Activated T-helper 2 cell treated with anti-CD3 and anti-CD28 coated beads, Interferon-gamma antibody, Interleukin-2, Interleukin-4, amounts not matched to agents 10 μg/mL and 5 μg/mL and 100 μg/mL, durations not matched to agents 14 hours and 24 hours and 36 hours (primary cell): ENCODE measurements at regions of chr1 and their contacts with region 1.

Region 1: DNA sequence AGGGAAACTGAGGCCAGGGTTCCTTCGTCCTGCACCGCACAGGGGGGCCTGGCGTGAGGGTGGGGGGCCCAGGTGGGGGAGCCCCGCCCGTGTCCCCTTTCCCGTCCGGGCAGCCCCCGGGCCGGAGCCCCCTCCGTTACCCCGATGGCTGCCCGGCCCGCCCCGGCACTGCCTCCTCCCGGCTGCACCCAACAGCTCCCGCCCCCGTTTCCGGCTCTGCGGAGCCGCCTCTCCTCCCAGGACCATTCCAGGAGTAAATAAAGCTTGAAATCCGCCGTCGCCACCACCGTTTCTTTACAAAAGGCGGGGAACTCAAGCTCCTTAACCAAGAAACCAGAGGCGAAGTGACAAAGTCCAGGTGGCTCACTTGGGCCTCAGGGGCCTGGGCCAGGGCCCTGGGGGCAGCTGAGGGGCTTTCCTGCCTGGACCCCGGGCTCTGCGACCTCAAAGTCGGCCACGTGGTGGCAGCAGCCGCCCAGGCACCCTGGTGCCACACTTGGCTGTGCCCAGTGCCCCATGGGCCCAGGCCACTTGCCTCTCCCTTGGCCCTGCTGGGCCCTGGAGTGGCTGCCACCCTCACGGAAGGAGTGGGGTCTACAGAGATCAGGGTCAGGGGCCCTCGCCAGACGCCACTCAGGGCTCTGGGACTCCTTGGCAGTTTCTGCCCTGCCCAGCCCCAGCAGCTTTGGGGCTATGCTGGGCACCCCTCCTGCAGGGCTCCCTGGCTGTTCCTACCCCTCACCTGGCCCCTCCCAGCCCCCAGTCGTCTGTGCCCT is 514 bp upstream of the FAAP20 start:
- DNase-seq: peak; percentile 91
- H3K4me3 Mint-ChIP-seq: peak overlapping the region; percentile 84
- H3K27ac Mint-ChIP-seq: peak overlapping the region; percentile 92
- H3K4me1 Mint-ChIP-seq: peaks cover 16% of the 10 kb centered on the region
- H3K27me3 Mint-ChIP-seq: no peaks in the 10 kb centered on the region

Region 2: DNA sequence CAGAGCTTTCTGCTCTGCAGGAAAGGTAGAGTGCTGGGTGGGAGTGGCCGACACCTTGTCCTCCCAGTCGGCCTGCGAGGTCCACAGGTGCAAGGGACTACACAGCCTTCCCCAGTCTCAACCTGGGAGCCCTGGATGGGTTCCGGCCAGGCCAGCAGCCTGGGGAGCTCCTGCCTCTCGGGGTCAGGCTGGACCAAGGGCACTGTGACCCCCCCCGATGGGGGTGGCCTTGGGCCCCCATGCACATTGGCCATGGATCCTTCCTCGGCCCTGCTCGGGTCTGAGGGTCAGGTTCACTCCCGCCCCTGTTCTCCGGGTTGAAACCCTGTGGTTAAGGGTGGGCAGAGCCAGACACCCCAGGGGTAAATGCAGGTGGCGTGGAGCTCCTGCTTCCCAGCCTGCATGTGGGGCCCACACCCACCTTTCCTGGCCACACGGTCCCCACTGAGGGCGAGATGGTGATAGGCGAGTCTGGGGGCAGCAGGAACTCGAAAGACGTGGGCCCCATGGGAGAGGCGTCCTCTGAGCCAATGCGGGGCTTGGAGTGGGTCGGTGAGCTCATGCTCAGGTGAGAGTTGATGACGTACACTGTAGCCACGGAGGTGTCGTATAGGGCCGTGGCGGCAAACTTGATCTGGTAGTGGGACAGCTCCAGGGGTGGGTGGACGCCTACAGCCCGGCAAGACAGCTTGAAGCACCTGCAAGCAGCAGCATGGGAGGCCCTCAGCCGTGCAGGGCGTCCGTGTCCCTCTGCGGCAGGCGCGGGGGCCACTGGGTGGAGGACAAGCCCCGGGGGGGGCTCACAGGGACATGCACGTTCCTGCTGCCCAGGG is 265.2 kb before region 1 on chr1:
- intact Hi-C with region 1: no loop called
- DNase-seq: no peak
- H3K4me3 Mint-ChIP-seq: no peak overlapping the region
- H3K27ac Mint-ChIP-seq: no peak overlapping the region
- H3K4me1 Mint-ChIP-seq: no peaks in the 10 kb centered on the region
- H3K27me3 Mint-ChIP-seq: no peaks in the 10 kb centered on the region

Region 3: GRCh38 chr1:2133039-2133878 is 61.8 kb before region 1 on chr1:
- intact Hi-C with region 1: loop called (anchors 2 kb)
- DNase-seq: peak; percentile 96
- H3K4me3 Mint-ChIP-seq: peak overlapping the region; percentile 76
- H3K27ac Mint-ChIP-seq: peak overlapping the region; percentile 52
- H3K4me1 Mint-ChIP-seq: peaks cover 8% of the 10 kb centered on the region
- H3K27me3 Mint-ChIP-seq: no peaks in the 10 kb centered on the region

Region 4: DNA sequence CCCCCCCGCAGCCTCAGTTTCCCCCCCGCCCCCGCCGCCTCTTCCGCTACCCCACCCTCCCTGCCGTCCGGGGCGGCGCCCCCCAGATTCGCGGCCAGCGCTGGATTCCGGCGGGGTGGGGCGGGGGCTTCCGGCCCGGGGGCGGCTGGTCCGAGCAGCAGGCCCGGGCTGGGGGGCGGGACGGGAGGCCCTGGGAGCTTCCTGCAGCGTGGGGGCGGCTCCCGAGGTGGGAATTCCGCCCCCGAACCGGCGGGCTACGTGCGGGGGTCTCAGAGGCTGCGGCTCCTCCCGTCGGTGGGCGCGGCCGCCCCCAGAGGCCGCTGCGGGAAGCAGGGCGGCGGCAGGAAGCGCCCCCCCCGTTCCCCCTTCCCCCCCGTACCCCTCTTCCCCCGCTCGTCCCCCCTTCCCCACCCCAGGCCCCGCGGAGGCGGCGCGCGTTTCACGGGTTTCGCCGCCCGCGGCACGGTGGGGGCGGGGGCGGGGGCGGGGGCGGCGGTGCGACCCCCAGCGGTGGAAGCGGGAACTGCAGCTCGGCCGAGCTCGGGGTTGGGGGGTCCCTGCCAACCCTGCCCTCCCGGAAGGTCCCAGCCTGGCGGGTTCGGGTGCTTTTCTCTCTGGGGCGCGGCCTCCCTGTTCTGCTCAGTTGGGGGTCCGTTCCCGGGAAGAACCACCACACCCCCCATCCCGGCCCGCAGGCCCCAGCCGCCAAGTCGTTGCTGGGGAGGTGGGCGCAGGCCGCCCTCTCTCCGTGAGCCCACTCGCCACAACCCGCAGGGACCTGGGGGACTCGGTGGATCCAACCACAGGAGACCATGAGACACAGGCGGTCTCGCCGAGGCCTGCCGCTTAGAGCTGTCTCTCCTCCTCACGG is 120.0 kb after region 1 on chr1:
- intact Hi-C with region 1: loop called (anchors 1 kb)
- DNase-seq: peak; percentile 42
- H3K4me3 Mint-ChIP-seq: no peak overlapping the region
- H3K27ac Mint-ChIP-seq: no peak overlapping the region
- H3K4me1 Mint-ChIP-seq: no peaks in the 10 kb centered on the region
- H3K27me3 Mint-ChIP-seq: no peaks in the 10 kb centered on the region

Region 5: DNA sequence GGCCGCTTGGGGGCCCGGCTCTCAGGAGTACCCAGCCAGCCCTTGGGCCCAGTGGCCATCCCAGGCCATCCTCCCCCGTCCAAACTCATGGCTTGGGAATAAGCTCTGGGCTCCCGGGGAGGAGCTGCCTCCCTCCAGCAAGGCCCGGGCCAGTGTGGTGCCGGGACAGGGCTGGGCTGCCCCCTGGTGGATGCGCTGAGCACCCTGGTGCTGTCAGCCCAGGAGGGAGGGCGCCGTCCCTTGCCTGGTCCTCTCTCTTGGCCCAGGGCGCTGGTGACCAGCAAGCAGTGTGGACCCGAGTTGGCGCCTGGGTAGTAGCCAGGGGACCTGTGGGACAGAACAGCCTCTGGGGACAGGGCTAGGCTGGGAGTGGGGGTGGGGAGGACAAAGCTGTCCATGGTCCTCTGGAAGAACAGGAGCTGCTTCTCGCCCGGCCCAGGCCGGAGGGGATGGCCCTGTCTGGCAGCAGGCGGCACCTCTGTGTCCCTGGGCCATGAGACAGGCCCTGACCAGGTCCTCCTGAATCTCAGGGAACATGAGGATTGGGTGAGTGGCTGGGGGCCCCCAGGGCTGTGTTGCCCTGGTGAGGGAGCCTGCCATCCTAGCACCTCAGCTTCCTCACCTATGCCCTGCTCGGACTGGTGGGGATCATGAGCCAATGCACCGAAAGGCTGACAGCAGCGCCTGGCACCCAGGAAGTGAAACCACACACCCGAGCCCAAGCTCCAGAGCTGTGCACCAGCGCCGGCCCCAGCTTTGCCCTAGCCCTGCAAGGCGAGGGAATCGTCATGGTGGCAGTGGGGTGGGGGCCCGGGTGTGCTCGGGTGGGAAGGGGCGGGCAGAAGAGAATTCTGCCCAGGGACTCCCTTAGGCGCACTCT is 186.9 kb after region 1 on chr1:
- intact Hi-C with region 1: loop called (anchors 1 kb)
- DNase-seq: peak; percentile 67
- H3K4me3 Mint-ChIP-seq: no peak overlapping the region
- H3K27ac Mint-ChIP-seq: no peak overlapping the region
- H3K4me1 Mint-ChIP-seq: no peaks in the 10 kb centered on the region
- H3K27me3 Mint-ChIP-seq: no peaks in the 10 kb centered on the region